PC-3 (cell line): ENCODE measurements at regions of chr3 and their contacts with region 1.

Region 1: GRCh38 chr3:161444006-161444693 is 52.5 kb upstream of the OTOL1 start:
- DNase-seq: peak; percentile 77
- ATAC-seq: peak; percentile 94
- H3K4me3 ChIP-seq: no peak overlapping the region; the same call in 1 of the 2 replicates
- H3K27ac ChIP-seq: peak overlapping the region; percentile 66
- H3K4me1 ChIP-seq: peaks cover 22% of the 10 kb centered on the region
- H3K27me3 ChIP-seq: no peaks in the 10 kb centered on the region
- CTCF ChIP-seq: no peak

Region 2: DNA sequence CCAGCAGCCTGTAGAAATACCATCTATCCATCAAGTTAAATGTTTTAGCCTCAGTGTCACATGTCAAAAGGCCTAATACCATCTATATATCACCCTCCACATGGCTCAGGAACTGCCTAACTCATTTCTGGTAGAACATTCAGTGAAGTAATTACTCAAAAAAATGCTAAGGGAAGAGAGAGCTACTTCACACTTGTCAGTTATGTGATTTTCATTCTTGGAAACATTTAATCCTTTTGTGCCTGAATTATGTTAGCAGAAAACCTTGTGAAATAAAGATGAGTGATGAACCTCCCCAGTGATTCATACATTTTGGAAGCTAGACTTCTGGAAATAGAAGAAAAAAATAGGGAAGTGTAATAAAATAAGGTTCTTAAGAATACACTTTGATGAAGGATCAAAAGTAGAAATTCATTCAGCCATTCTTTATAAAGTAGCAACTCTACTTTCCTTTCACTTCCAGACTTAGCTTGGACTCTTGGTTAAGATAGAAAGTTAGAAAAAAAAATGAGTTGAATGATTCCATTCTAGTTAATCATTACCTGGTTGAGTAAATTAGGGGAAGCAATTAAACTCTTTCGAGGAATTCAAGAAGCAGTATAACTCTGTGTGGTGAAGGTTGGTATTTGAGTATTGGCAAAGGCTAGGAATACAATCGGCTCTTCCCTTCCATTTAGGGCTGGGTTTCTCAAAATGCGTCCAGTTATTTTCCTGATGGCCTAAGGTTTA is 56.1 kb after region 1 on chr3:
- CTCF ChIA-PET with region 1: no interaction called
- POLR2A ChIA-PET with region 1: no interaction called
- intact Hi-C with region 1: loop called (anchors 1 kb)
- DNase-seq: peak; percentile 51
- ATAC-seq: peak; percentile 86
- H3K4me3 ChIP-seq: no peak overlapping the region
- H3K27ac ChIP-seq: no peak overlapping the region
- H3K4me1 ChIP-seq: peaks cover 10% of the 10 kb centered on the region
- H3K27me3 ChIP-seq: no peaks in the 10 kb centered on the region
- CTCF ChIP-seq: no peak

Region 3: DNA sequence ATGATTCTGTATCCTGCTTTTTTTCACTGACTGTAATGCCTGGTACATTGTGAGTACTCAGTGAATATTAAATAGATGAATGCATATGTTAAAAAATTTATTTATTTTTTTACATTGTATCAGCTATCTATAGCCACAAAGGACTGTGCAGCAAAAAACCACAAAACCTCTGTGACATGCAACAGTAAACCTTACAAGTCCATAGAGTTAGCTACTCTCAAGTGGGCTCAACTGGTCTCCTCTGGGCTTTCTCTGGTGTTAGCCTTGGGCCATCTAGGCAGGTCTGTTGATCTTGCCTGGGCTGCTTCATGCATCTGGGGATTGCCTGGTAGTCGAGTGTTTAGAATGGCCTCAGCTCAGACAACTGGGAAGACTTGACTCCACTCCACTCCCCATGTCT is 87.8 kb after region 1 on chr3:
- CTCF ChIA-PET with region 1: no interaction called
- POLR2A ChIA-PET with region 1: no interaction called
- intact Hi-C with region 1: no loop called
- DNase-seq: no peak
- ATAC-seq: no peak
- H3K4me3 ChIP-seq: no peak overlapping the region
- H3K27ac ChIP-seq: no peak overlapping the region
- H3K4me1 ChIP-seq: no peaks in the 10 kb centered on the region
- H3K27me3 ChIP-seq: no peaks in the 10 kb centered on the region
- CTCF ChIP-seq: no peak